ENCODE measurements at regions of chr10 and their contacts with region 1.

Region 1: DNA sequence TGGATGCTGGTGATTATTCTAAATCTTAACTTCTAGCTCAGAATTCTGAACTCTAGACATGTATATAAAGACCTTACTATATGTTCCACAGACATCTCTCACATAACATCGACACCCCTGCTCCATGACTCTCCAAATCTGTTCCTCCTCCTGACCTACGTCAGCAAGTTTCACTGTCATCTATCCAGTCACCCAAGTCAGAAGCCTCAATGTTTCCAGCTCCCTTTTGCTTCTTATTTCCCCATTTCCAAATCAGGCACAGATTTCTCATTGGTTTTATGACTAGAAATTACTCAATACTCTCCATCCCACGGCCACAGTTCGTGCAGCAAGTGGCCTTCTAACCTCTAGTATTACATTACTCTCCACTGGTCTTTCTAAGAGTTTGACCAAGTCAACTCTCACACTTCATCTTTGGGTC is 28.5 kb downstream of the EPC1 start:
- DNase-seq: no peak
- H3K4me3 ChIP-seq: no peak overlapping the region
- H3K27ac ChIP-seq: no peak overlapping the region
- H3K4me1 ChIP-seq: peaks cover 17% of the 10 kb centered on the region
- H3K27me3 ChIP-seq: no peaks in the 10 kb centered on the region
- CTCF ChIP-seq: no peak

Region 2: DNA sequence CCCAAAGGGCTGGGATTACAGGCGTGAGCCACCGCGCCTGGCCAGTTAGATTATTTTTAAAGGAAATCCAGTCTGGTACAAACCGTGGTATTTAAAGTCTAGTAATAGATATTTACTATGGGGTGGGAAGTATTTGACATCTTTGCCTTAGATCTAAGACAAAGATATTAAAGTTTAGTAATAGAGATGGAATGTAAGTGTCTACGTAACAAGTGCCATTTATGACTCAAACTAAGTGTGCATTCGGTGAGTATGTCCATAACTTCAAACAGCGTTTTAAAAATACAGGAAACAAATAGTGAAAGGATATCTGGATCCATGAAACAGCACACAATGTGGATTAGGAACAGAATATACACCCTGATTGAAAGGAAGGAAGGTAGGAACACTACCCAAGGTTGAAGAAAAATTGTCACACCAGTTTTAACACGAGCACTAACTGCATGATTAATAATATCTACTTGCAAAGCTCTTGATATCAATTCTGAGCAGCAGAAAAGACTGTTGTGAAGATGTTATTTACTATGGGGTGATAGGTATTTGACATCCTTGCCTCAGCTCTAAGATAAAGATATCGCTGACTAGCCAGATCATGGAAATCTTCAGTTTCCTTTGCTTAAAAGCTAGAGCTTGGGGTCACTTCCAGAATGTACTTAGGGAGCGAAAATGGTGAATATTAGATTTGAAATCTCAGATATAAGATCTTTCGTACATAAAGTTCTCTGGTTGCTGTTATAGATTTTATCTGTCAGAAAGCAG is 20.3 kb before region 1 on chr10:
- CTCF ChIA-PET with region 1: no interaction called
- dilution Hi-C with region 1: no loop called
- in situ Hi-C with region 1: no loop called
- intact Hi-C with region 1: loop called (anchors 2 kb)
- DNase-seq: peak; percentile 63
- H3K4me3 ChIP-seq: no peak overlapping the region
- H3K27ac ChIP-seq: no peak overlapping the region
- H3K4me1 ChIP-seq: peaks cover 7% of the 10 kb centered on the region
- H3K27me3 ChIP-seq: no peaks in the 10 kb centered on the region
- CTCF ChIP-seq: no peak